ENCODE measurements at regions of chr11 and their contacts with region 1.

Region 1: GRCh38 chr11:22169833-22170232 is 23.1 kb upstream of the ANO5 start:
- DNase-seq: no peak
- ATAC-seq: no peak
- H3K4me3 ChIP-seq: no peak overlapping the region
- H3K27ac ChIP-seq: no peak overlapping the region
- H3K4me1 ChIP-seq: no peaks in the 10 kb centered on the region
- H3K27me3 ChIP-seq: no peaks in the 10 kb centered on the region
- CTCF ChIP-seq: peak in 6 of 7 experiments; percentile 36 to 52 (median 48)
- POLR2A ChIP-seq: no peak

Region 2: GRCh38 chr11:22304337-22304961 is 134.6 kb after region 1 on chr11:
- intact Hi-C with region 1: loop called (anchors 10 kb)
- DNase-seq: no peak
- ATAC-seq: no peak
- H3K4me3 ChIP-seq: no peak overlapping the region
- H3K27ac ChIP-seq: no peak overlapping the region
- H3K4me1 ChIP-seq: no peaks in the 10 kb centered on the region
- H3K27me3 ChIP-seq: no peaks in the 10 kb centered on the region
- CTCF ChIP-seq: peak; percentile 28 to 76 (median 69)
- POLR2A ChIP-seq: no peak

Region 3: DNA sequence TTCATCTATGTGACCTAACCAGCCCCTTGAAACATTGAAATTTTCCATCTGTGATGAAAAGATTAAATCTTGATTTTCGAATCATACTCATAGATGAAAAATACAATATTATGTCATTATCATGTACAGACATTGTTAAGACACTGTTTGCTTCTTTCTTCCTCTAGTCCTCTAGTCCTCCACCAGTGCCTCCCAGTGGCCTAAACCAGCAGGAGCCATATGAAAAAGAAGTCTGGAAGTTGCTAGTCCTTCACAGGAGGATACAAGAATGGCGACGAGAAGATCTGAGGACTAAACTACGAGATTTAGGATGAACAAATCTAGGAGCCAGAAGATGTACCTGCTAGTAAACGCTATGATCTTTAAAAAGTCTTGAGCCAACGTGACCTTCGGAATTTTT is 302.5 kb after region 1 on chr11:
- intact Hi-C with region 1: no loop called
- DNase-seq: no peak
- ATAC-seq: no peak
- H3K4me3 ChIP-seq: no peak overlapping the region
- H3K27ac ChIP-seq: no peak overlapping the region
- H3K4me1 ChIP-seq: no peaks in the 10 kb centered on the region
- H3K27me3 ChIP-seq: no peaks in the 10 kb centered on the region
- CTCF ChIP-seq: no peak
- POLR2A ChIP-seq: no peak

Region 4: DNA sequence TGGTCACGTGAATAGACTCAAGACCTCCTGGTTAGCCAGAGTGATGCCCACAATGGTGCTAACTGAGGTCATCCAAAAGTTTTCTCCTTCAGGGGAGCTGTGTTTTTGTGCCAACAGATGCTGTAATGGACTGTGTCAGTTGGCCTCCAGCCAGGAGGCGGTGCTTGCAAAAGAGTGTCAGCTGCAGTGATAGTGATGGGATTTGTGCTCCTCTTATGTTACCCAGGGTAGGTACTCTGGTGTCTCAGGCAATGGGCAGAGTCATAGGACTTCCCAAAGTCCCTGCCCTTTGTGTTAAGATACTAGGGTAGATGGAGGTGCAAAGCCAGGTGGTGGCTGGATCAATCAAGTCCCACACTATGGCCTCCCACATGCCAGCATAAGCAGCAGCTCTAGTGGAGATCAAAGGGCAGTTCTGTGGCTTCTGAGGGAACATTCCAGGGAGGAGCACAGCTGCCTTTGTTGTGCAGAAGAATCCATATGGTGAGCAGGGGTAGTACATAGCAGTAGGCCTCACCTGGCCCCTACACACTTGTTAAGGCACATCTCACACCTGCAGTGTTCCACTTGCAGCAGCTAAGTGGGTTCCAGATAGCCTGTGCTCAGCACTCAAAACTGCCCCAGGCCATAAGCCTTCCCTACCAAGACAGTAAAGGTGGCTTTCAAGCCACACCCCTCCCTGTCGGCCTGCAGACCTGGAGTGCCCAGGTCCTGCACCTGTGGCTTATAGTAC is 465.2 kb after region 1 on chr11:
- intact Hi-C with region 1: no loop called
- DNase-seq: peak in 3 of 4 donors; percentile 14 to 47 (median 23)
- ATAC-seq: peak; percentile 42
- H3K4me3 ChIP-seq: no peak overlapping the region
- H3K27ac ChIP-seq: no peak overlapping the region
- H3K4me1 ChIP-seq: no peaks in the 10 kb centered on the region
- H3K27me3 ChIP-seq: no peaks in the 10 kb centered on the region
- CTCF ChIP-seq: no peak
- POLR2A ChIP-seq: no peak

Region 5: DNA sequence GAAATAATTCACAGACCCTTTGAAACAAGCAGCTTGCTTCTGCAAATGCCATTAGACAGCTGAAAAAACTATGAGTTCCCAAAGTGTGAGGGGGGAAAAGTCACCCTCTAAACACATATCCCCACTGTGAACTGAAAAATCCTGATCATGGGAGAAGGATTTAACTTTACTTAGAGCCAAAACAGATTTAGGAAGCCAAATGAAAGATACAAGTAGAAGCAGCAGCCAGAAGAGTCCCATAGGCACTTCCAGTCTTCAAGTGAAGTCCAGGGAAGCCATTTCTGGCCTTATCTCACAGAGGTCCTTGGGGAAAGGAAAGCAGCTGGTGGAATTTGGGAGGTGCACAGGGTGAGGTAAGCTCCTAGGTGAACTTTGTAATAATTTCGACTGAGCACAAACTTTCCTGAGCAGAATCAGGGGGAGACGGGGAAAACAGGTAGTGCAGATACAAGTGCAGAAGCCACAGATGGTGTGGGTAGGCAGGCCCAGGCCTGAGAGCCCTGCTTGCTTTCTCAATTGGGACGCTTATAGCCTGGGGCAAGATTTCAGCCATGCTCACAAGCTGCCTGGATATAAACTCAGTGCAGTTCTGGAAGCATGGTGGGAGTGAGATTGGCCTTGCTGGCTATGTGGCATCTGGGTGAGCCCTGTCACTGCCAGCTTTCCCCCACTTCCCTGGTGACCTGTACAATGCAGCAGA is 541.4 kb after region 1 on chr11:
- intact Hi-C with region 1: no loop called
- DNase-seq: peak in 3 of 4 donors; percentile 10 to 42 (median 18)
- ATAC-seq: peak; percentile 73
- H3K4me3 ChIP-seq: no peak overlapping the region
- H3K27ac ChIP-seq: peak overlapping the region in 3 of 4 donors; percentile 26 to 37 (median 28)
- H3K4me1 ChIP-seq: peaks cover 18% of the 10 kb centered on the region
- H3K27me3 ChIP-seq: no peaks in the 10 kb centered on the region
- CTCF ChIP-seq: no peak
- POLR2A ChIP-seq: no peak